ENCODE measurements at regions of chr10 and their contacts with region 1.

Region 1: GRCh38 chr10:96764425-96765060 is 44.2 kb upstream of the PIK3AP1 start:
- DNase-seq: no peak
- H3K4me3 ChIP-seq: no peak overlapping the region
- H3K27me3 ChIP-seq: peaks cover 1% of the 10 kb centered on the region; the same call in 1 of the 2 replicates
- CTCF ChIP-seq: no peak

Region 2: GRCh38 chr10:96830511-96831199 is 66.1 kb after region 1 on chr10:
- CTCF ChIA-PET with region 1: interaction called, 10 read pairs
- POLR2A ChIA-PET with region 1: no interaction called
- DNase-seq: no peak
- H3K4me3 ChIP-seq: no peak overlapping the region
- H3K27me3 ChIP-seq: no peaks in the 10 kb centered on the region
- CTCF ChIP-seq: peak; percentile 82